ENCODE measurements at regions of chr5 and their contacts with region 1.

Region 1: DNA sequence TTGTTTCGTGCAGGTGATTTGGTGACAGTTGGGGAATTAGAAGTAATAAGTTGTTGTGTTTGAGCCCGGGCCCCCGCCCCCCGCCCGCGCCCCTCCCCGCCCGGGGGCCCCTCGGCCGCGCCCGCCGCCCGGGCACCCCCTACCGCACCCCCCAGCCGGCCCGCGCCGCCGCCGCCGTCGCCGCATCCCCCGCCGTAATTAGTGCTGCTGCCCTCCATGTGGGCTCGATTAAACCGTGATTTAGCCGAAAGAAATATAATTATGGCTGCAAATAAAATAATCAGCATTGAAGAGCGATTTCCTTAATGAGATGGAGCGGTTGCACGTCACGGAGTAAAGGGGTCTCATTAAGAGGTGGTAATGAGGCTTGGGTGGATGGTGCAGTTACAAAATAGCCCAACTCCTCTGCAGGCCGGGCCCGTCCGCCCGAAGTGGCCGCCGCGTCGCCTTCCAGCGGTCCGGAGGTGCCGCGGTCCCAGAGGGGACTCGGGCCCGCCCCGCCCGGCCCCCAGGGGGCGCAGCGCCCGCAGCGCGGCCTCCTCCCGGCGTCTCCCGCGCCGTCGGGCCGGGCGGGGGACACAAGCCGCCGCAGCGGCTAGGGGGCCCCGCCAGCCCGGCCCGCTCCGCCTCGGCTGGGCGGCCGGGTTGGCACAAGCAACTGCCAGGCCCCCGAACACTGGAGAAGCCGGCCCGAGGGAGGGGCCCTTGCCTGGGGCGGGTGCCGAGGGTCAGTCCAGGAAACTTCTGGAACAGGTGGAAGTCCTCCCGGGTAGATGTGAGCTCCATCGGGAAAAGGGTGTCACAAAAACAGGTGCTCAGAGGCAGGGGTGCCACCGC is 6.9 kb upstream of the OTP start:
- DNase-seq: peak in 30 of 42 donors; percentile 13 to 72 (median 44)

Region 2: DNA sequence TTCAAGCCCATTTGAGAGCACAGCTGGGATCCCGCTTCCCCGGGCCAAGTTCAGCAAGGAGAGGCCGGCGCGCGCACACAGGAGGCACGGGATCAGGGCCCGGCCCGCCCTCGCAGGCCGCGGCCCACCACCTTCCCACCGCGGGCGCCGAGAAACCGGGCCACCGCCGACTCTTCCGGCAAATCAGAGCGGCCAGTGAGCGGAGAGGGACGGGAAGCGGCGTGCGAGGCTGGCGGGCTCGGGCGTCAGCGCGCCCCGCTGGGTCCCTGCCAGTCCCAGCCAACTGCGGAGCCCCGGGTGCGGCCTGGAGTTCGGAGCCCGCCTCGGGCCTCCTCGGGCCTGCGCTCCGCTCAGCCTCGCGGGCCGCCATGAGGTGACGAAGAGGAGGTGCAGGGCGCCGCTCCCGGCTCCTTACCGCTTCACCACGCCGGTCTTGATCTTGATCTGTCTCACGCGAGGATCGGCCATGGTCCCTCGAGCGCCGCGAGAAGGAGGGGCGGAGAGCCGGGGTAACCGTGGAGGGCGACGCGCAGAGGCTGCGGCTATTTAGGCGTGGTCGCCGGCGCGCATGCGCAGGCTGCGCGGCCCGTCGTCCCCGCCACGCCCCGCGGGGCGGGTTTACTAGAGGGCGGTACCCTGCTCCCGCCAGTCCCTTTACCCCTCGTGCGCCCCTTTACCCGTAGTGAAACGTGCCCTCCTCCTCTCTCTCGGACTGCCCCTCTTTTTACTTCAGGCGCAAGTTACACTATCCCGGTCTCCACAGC is 130.6 kb after region 1 on chr5 and contains the start of gene TBCA:
- intact Hi-C with region 1: loop called (anchors 5 kb)
- DNase-seq: peak; percentile 51 to 94 (median 88)

Region 3: DNA sequence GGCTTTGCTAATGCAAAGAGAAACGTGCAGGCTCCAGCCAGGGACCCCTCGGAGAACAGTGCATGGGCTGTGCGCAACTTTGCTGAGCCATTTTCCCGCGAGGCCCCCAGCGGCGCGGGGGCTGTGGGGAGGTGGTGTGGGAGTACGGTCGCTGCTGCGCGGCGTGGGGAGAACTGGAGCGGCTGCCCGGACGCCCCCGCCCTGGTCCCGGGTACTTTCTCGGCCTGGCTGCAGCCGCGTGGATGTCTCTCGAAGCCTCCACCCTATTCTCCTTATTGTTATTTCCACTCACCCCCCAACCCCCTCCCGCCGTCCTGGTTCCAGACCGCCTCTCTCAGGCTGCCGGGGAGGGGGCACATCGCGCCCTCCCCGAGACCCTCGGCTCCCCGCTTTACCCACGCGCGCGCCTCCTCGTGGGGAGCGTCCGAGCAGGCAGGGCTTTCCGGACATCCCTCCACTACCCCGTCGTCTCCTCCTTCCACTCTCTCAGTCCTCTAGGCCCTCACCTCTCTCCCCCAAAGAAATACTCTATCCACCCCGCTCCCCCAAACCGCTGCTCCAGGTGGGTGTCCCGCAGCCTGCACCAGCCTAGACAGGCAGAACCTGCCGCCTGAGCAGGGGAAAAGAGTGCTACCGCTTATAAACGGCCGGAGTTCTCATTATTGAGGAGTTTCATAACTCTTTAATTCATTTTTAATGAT is 199.4 kb after region 1 on chr5:
- intact Hi-C with region 1: loop called (anchors 10 kb)
- DNase-seq: peak in 31 of 42 donors; percentile 16 to 71 (median 36)

Region 4: DNA sequence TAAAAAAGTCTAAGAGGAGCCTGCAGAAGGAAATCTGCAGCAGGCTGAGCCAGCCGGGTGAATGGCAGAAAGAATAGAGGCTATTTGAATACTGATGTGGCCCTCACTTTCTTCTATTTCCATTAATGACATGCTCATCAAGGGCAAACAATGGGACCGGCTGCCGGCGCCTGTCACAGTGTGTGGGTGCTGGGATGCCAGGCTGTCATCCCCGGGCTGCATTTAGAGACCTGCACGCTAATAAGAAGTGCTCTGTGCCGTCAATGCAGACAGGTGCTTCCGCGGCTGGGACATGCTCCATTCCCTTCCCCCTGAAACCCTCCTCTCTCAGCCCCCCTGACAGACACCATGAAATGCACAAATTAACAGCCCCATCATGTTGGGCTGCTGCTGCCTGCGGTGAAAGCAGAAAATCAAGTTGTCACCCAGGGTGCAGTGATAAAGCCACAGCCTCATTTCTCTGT is 348.5 kb after region 1 on chr5:
- intact Hi-C with region 1: loop called (anchors 10 kb)
- DNase-seq: peak; percentile 57 to 92 (median 78)